MCF 10A (cell line): ENCODE measurements at regions of chr16 and their contacts with region 1.

Region 1: DNA sequence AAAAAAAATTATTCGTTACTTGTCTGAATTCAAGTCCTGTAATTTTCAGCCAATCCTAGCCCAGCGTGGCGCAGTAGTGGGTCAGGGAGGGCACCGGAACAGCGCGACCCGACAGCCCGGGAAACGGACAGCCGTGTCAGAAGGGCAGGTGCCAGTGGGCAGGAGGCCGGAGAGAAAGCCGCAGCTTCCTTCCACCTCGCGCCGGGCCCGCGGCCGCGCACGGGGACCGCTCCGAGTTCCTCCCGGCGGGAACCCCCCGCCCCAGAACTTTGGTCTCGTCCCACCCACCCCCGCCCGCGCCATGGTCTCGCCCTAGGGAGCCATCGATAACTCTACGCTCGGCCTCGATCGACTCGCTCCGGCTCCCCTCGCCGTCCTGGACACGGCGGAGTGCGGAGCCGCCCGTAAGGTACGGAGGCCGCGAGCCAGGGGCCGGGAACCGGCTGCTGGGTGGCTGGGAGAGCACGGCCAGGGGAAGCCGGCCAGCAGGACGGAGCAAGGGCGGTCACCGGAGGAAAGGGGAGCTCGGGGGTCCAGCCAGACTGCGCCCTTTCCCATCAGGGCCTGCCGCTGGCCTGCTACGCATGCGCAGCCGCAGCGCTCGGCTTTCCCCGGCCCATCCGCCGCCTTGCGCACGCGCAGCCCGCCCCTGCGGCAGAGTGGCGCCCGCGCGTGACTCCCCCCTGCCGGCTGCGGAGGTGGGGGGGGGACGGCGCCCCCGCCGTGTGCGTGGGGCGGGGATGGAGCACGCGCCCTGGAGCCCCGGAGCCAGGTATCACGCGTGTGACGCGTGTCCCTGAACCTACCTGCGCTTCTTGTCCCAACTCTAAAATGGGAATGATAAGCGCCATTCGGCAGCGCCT is at the start of gene MLST8:
- DNase-seq: peak; percentile 79
- H3K4me3 Mint-ChIP-seq: peak within 1 kb of the TSS; percentile 68
- H3K27ac Mint-ChIP-seq: peak within 1 kb of the TSS; percentile 69
- H3K4me1 Mint-ChIP-seq: peaks cover 15% of the 10 kb centered on the region
- H3K27me3 Mint-ChIP-seq: no peaks in the 10 kb centered on the region
- CTCF ChIP-seq: peak; percentile 13
- total RNA-seq, gene MLST8: 63.4 and 87.6 TPM in 2 replicates

Region 2: DNA sequence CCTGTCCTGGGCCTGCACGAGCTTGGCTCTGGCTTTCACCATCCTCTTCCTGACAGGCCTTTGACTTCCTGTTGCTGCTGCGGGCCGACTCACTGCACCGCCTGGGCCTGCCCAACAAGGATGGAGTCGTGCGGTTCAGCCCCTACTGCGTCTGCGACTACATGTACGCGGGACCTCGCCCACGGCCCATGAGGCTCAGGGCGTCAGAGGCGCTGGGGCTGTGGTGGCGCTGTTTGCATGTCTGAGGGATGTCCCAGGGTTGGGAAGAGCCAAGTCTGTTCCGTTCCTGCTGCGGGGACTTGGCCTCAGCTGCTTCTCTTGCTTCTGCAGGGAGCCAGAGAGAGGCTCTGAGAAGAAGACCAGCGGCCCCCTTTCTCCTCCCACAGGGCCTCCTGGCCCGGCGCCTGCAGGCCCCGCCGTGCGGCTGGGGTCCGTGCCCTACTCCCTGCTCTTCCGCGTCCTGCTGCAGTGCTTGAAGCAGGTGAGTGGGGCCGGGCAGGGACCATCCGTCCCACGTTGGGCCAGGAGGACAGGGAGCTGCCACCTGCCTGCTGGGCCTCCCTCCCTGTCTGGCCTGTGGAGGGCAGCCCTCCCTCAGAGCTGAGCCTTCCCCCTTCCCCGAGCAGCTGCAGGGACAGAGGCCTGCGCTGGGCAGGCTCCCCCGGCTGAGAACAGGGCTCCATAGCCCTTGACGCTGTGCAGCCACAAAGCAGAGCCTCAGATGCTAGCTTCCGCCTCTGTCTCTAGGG is 133.7 kb before region 1 on chr16:
- CTCF ChIA-PET with region 1: no interaction called
- POLR2A ChIA-PET with region 1: no interaction called
- intact Hi-C with region 1: no loop called
- DNase-seq: no peak
- H3K4me3 Mint-ChIP-seq: no peak overlapping the region
- H3K27ac Mint-ChIP-seq: no peak overlapping the region
- H3K4me1 Mint-ChIP-seq: no peaks in the 10 kb centered on the region
- H3K27me3 Mint-ChIP-seq: no peaks in the 10 kb centered on the region
- CTCF ChIP-seq: no peak

Region 3: DNA sequence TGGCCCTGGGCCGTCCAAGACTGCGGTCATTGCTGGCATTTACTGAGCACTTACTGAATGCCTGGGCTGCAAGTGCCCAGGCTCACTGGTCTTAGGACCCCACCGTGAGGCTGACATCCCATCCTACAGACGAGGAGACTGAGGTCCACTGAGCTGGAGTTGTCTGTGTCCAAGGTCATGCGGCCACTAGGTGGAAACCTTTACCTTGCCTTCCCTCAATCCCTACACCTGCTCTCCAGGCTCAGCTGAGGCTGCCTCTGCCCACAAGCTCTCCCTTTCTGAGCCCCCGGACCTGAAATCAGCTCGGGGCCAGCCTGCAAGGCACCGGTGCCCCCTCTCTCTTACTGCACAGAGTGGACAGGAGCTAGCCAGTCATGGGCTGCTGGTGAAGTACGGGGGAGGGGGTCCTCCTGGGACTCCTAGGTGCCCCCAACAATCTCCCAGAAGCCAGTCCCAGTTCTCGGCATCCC is 10.4 kb before region 1 on chr16:
- CTCF ChIA-PET with region 1: interaction called, 6 read pairs
- POLR2A ChIA-PET with region 1: interaction called, 22 read pairs
- intact Hi-C with region 1: no loop called
- DNase-seq: peak; percentile 70
- H3K4me3 Mint-ChIP-seq: no peak overlapping the region
- H3K27ac Mint-ChIP-seq: no peak overlapping the region
- H3K4me1 Mint-ChIP-seq: no peaks in the 10 kb centered on the region
- H3K27me3 Mint-ChIP-seq: no peaks in the 10 kb centered on the region
- CTCF ChIP-seq: peak; percentile 68

Region 4: GRCh38 chr16:2333772-2334379 is 128.5 kb after region 1 on chr16:
- CTCF ChIA-PET with region 1: no interaction called
- POLR2A ChIA-PET with region 1: no interaction called
- intact Hi-C with region 1: no loop called
- DNase-seq: no peak
- H3K4me3 Mint-ChIP-seq: no peak overlapping the region
- H3K27ac Mint-ChIP-seq: no peak overlapping the region
- H3K4me1 Mint-ChIP-seq: peaks cover 6% of the 10 kb centered on the region
- H3K27me3 Mint-ChIP-seq: peaks cover 27% of the 10 kb centered on the region
- CTCF ChIP-seq: no peak

Region 5: GRCh38 chr16:2371421-2371820 is 166.1 kb after region 1 on chr16:
- CTCF ChIA-PET with region 1: no interaction called
- POLR2A ChIA-PET with region 1: no interaction called
- intact Hi-C with region 1: no loop called
- DNase-seq: no peak
- H3K4me3 Mint-ChIP-seq: no peak overlapping the region
- H3K27ac Mint-ChIP-seq: no peak overlapping the region
- H3K4me1 Mint-ChIP-seq: peaks cover 7% of the 10 kb centered on the region
- H3K27me3 Mint-ChIP-seq: no peaks in the 10 kb centered on the region
- CTCF ChIP-seq: no peak